Activated B cell treated with CpG ODN at 0.5 μM for 24 hours (primary cell): ENCODE measurements at regions of chr5 and their contacts with region 1.

Region 1: GRCh38 chr5:99747342-99747741 is 787.8 kb upstream of the FAM174A start:
- DNase-seq: no peak
- ATAC-seq: no peak
- H3K4me3 Mint-ChIP-seq: no peak overlapping the region
- H3K27ac Mint-ChIP-seq: no peak overlapping the region
- H3K4me1 Mint-ChIP-seq: no peaks in the 10 kb centered on the region
- H3K27me3 Mint-ChIP-seq: no peaks in the 10 kb centered on the region
- CTCF ChIP-seq: no peak

Region 2: GRCh38 chr5:99715921-99716320 is 31.4 kb before region 1 on chr5:
- CTCF ChIA-PET with region 1: no interaction called
- POLR2A ChIA-PET with region 1: no interaction called
- intact Hi-C with region 1: loop called (anchors 1 kb)
- DNase-seq: no peak
- ATAC-seq: no peak
- H3K4me3 Mint-ChIP-seq: no peak overlapping the region
- H3K27ac Mint-ChIP-seq: no peak overlapping the region
- H3K4me1 Mint-ChIP-seq: no peaks in the 10 kb centered on the region
- H3K27me3 Mint-ChIP-seq: no peaks in the 10 kb centered on the region
- CTCF ChIP-seq: no peak